Heart right ventricle (tissue), 16 donors: ENCODE measurements at regions of chr15 and their contacts with region 1.

Region 1: GRCh38 chr15:63402498-63403253 is 21.0 kb upstream of the CA12 start:
- DNase-seq: no peak
- ATAC-seq: peak in 6 of 8 donors; percentile 11 to 62 (median 48)
- H3K4me3 ChIP-seq: no peak overlapping the region
- H3K27ac ChIP-seq: no peak overlapping the region
- H3K4me1 ChIP-seq: peaks cover 0 to 9% (median 0%) of the 10 kb centered on the region in 9 donors
- H3K27me3 ChIP-seq: no peaks in the 10 kb centered on the region
- CTCF ChIP-seq: peak; percentile 51 to 81 (median 73)

Region 2: GRCh38 chr15:62847900-62848489 is 554.7 kb before region 1 on chr15:
- intact Hi-C with region 1: loop called in 1 of 10 experiments (anchors 5 kb)
- DNase-seq: peak; percentile 74
- ATAC-seq: peak; percentile 57 to 82 (median 75)
- H3K4me3 ChIP-seq: no peak overlapping the region
- H3K27ac ChIP-seq: peak overlapping the region in 5 of 10 donors; percentile 11 to 30 (median 21)
- H3K4me1 ChIP-seq: peaks cover 0 to 49% (median 22%) of the 10 kb centered on the region in 9 donors
- H3K27me3 ChIP-seq: no peaks in the 10 kb centered on the region
- CTCF ChIP-seq: peak; percentile 64 to 87 (median 80)

Region 3: GRCh38 chr15:63048115-63048775 is 354.4 kb before region 1 on chr15:
- intact Hi-C with region 1: loop called in 1 of 10 experiments (anchors 10 kb)
- DNase-seq: peak; percentile 87 to 92
- ATAC-seq: peak; percentile 49 to 88 (median 78)
- H3K4me3 ChIP-seq: peak overlapping the region; percentile 66 to 92 (median 81)
- H3K27ac ChIP-seq: peak overlapping the region; percentile 88 to 99 (median 96)
- H3K4me1 ChIP-seq: peaks cover 19 to 76% (median 59%) of the 10 kb centered on the region in 9 donors
- H3K27me3 ChIP-seq: peaks cover 0 to 41% (median 0%) of the 10 kb centered on the region in 7 donors
- CTCF ChIP-seq: peak; percentile 84 to 95 (median 92)

Region 4: GRCh38 chr15:63122002-63122893 is 280.4 kb before region 1 on chr15:
- intact Hi-C with region 1: loop called in 1 of 10 experiments (anchors 10 kb)
- DNase-seq: peak; percentile 81 to 84
- ATAC-seq: peak; percentile 95 to 98 (median 98)
- H3K4me3 ChIP-seq: peak overlapping the region; percentile 91 to 100 (median 97)
- H3K27ac ChIP-seq: peak overlapping the region; percentile 94 to 98 (median 96)
- H3K4me1 ChIP-seq: peaks cover 0 to 13% (median 8%) of the 10 kb centered on the region in 9 donors
- H3K27me3 ChIP-seq: no peaks in the 10 kb centered on the region
- CTCF ChIP-seq: peak in 6 of 9 donors; percentile 24 to 53 (median 38)

Region 5: DNA sequence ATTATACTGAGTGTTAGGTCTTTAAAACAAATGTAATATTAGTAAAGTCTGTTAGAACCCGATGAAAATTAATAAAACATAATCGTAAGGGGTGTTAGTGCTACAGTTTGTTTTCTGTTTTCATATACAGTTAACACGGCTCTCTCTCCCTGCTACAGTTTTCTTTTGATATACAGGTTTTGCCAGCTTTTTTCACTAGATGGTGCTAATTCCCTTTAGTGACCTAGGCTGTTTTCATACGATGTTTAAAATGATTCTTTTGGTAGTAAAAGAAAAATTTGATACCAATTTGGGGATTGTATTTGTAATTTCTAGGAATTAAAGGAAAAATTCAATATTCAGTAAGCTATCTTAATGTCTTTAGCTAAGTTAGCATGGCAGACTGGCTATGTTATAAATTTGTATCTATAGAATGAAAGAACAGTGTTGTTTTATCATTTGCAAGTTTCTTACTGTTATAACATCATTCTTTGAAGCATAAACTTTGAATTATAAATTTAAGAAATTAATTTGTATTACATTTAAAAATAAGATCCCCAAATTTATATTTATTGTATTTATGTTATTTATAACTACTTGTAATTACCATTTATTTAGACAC is 113.8 kb before region 1 on chr15:
- intact Hi-C with region 1: loop called (anchors 1 to 2 kb)
- DNase-seq: no peak
- ATAC-seq: peak in 5 of 8 donors; percentile 42 to 76 (median 45)
- H3K4me3 ChIP-seq: no peak overlapping the region
- H3K27ac ChIP-seq: no peak overlapping the region
- H3K4me1 ChIP-seq: peaks cover 0 to 33% (median 6%) of the 10 kb centered on the region in 9 donors
- H3K27me3 ChIP-seq: no peaks in the 10 kb centered on the region
- CTCF ChIP-seq: peak; percentile 40 to 90 (median 68)

Region 6: GRCh38 chr15:63466378-63467192 is 63.9 kb after region 1 on chr15:
- intact Hi-C with region 1: loop called in 1 of 10 experiments (anchors 10 kb)
- DNase-seq: peak in 1 of 2 donors; percentile 40
- ATAC-seq: peak; percentile 55 to 86 (median 76)
- H3K4me3 ChIP-seq: no peak overlapping the region
- H3K27ac ChIP-seq: no peak overlapping the region
- H3K4me1 ChIP-seq: peaks cover 0 to 14% (median 0%) of the 10 kb centered on the region in 9 donors
- H3K27me3 ChIP-seq: peaks cover 0 to 4% (median 0%) of the 10 kb centered on the region in 7 donors
- CTCF ChIP-seq: peak; percentile 23 to 71 (median 60)